Activated T-helper 1 cell treated with anti-CD3 and anti-CD28 coated beads, Interleukin-12 subunit alpha, Interleukin-12 subunit beta, Interleukin-2, Interleukin-4 antibody, amounts not matched to agents 30 ng/mL and 10 ng/mL and 1 ng/mL, durations not matched to agents 14 hours and 24 hours and 36 hours (primary cell): ENCODE measurements at regions of chr2 and their contacts with region 1.

Region 1: GRCh38 chr2:64609227-64609941 is 44.3 kb downstream of the SERTAD2 start:
- DNase-seq: peak; percentile 67
- H3K4me3 Mint-ChIP-seq: peak overlapping the region; percentile 68
- H3K27ac Mint-ChIP-seq: peak overlapping the region; percentile 29
- H3K4me1 Mint-ChIP-seq: peaks cover 28% of the 10 kb centered on the region
- H3K27me3 Mint-ChIP-seq: peaks cover 11% of the 10 kb centered on the region

Region 2: DNA sequence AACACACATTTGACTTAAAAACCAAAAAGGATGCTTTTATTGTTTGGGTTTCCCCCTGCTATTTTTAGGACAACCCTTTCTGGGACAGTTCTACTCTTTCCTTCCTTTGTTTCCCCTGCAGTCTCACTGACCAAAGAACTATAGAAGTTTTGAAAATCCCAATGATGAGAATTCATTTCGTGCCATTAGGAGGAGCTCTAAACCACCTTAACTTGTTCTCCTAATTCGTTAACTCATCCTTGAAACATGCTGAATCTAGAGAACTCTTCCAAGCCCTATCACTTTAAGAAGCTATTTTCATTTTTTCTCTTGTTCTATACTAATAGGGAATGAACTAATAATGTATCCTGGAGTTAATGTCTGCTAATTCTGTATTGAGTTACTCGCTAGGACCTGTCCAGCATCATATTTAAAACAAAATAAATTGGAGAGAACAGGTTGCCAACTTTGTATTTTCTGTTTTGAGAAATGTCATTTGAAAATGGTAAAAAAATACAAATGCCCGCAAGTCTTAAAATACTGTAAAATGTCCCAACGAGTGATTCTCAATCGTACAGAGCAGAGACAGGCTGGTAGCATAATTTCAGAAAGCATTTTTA is 22.4 kb before region 1 on chr2:
- intact Hi-C with region 1: loop called (anchors 2 kb)
- DNase-seq: no peak
- H3K4me3 Mint-ChIP-seq: no peak overlapping the region
- H3K27ac Mint-ChIP-seq: no peak overlapping the region
- H3K4me1 Mint-ChIP-seq: peaks cover 17% of the 10 kb centered on the region
- H3K27me3 Mint-ChIP-seq: no peaks in the 10 kb centered on the region

Region 3: DNA sequence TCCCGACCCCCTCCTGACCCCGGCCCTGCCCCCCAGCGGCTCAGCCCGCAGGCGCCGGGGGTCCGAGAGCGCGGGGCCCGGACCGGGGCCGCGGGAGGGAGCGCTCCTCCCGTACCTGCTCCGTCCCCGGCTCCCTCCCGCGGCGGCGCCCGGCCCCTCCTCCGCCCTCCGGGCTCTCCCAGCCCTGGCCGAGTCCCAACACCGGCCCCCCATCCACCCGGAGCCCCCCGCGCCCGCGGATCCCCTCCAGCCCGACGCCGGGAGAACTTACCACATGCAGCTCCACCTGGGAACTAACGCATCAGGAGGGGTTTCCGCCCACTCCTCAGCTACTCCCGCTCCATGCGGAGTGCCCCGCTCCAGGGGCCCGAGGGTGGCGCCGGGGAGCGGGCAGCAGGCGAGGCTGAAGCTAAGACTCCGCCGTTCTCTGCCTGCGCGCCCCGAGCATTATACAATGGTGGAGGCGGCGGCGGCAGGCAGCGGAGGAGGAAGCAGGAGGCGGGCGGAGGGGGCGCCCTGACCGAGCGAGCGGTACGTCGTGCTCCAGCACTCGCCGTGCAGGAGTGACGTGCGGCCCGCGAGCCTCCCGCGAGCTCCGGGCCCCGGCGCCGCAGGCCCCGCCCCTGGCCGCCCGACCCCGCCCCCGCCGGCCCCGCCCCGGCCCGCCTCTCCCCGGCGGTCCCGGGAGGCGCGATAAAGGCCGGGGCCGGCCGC is 44.1 kb after region 1 on chr2 and contains the start of gene SERTAD2:
- intact Hi-C with region 1: loop called (anchors 2 kb)
- DNase-seq: peak; percentile 83
- H3K4me3 Mint-ChIP-seq: peak within 1 kb of the TSS; percentile 90
- H3K27ac Mint-ChIP-seq: peak within 1 kb of the TSS; percentile 90
- H3K4me1 Mint-ChIP-seq: peaks cover 71% of the 10 kb centered on the region
- H3K27me3 Mint-ChIP-seq: no peaks in the 10 kb centered on the region
- total RNA-seq, gene SERTAD2: 27.3 and 28.5 TPM in 2 replicates

Region 4: DNA sequence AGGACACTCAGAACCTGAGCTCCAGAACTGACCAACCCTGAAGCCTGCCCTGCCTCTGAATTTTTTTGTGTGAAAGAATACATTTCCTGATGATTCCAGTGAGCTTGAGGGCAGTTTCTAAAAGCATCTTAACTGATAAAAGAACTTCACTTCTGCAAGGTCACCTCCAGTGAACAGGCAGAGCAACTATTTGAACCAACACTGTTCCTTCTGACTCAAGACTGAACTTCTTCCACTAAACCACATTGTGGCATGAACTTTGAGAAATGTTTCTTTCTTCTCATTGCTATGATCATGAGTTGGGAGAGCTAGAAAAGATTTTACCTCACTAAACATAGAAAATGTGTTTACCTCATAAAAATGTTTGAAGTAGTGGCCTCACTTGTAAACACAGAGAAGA is 128.2 kb after region 1 on chr2:
- intact Hi-C with region 1: loop called (anchors 2 kb)
- DNase-seq: no peak
- H3K4me3 Mint-ChIP-seq: peak overlapping the region; percentile 46
- H3K27ac Mint-ChIP-seq: peak overlapping the region; percentile 91
- H3K4me1 Mint-ChIP-seq: peaks cover 54% of the 10 kb centered on the region
- H3K27me3 Mint-ChIP-seq: no peaks in the 10 kb centered on the region

Region 5: DNA sequence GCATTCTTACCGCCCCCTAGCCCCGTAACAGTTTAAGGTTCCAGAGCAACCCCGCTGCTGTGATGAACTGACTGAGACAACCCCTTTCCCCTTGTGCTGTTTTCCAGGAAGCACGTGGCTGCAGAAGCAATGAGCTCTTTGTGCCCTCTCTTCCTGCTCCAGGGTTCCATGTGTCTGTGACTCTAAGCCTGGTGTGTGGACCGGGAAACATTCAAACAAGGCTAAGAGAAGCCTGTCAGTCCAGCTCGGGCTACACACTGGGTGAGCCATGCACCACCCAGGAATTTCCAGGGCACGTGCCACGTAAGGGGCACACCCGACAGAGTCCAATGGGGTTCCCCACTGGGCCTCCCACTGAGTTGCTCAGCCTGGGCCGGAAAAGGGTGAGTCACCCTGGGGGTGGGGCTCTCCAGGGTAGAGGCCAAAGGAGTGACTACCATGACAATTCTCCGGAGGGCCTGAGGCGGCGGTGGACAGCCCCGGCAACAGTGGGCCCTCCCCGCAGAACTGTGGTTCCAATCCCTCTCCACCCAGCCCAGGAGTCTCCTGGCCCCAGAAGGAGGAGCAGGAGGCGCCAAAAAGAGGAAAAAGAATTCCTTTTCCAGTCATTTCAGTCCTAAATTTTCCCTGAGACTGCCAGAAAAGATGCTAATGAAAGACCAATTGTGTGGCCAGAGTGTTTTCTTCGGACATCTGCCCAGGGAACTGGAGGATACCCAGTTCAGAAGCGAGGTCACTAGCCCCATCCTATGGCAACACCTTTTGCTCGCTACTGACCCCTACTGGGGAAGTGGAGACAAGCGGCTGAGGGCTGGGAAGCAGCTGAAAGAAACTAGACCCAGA is 222.0 kb after region 1 on chr2:
- intact Hi-C with region 1: loop called (anchors 1 kb)
- DNase-seq: peak; percentile 73
- H3K4me3 Mint-ChIP-seq: no peak overlapping the region
- H3K27ac Mint-ChIP-seq: peak overlapping the region; percentile 73
- H3K4me1 Mint-ChIP-seq: peaks cover 31% of the 10 kb centered on the region
- H3K27me3 Mint-ChIP-seq: peaks cover 1% of the 10 kb centered on the region

Region 6: GRCh38 chr2:64873472-64873924 is 264.1 kb after region 1 on chr2:
- intact Hi-C with region 1: loop called (anchors 2 kb)
- DNase-seq: peak; percentile 74
- H3K4me3 Mint-ChIP-seq: no peak overlapping the region
- H3K27ac Mint-ChIP-seq: no peak overlapping the region
- H3K4me1 Mint-ChIP-seq: peaks cover 8% of the 10 kb centered on the region
- H3K27me3 Mint-ChIP-seq: peaks cover 26% of the 10 kb centered on the region

Region 7: GRCh38 chr2:65227425-65228262 is 618.3 kb after region 1 on chr2 and contains the start of gene ACTR2:
- intact Hi-C with region 1: loop called (anchors 1 kb)
- DNase-seq: peak; percentile 95
- H3K4me3 Mint-ChIP-seq: peak within 1 kb of the TSS; percentile 98
- H3K27ac Mint-ChIP-seq: peak within 1 kb of the TSS; percentile 99
- H3K4me1 Mint-ChIP-seq: peaks cover 36% of the 10 kb centered on the region
- H3K27me3 Mint-ChIP-seq: no peaks in the 10 kb centered on the region
- total RNA-seq, gene ACTR2: 285 and 295 TPM in 2 replicates